SK-N-SH (cell line): ENCODE measurements at regions of chr17 and their contacts with region 1.

Region 1: GRCh38 chr17:59440784-59441441 is 109.5 kb downstream of the YPEL2 start:
- DNase-seq: peak; percentile 82
- H3K4me3 ChIP-seq: no peak overlapping the region
- H3K27ac ChIP-seq: no peak overlapping the region
- H3K4me1 ChIP-seq: peaks cover 0 to 4% of the 10 kb centered on the region in 2 experiments; a peak in 1 of 4 replicates
- H3K27me3 ChIP-seq: no peaks in the 10 kb centered on the region
- CTCF ChIP-seq: peak; percentile 99
- EP300 ChIP-seq: no peak
- RAD21 ChIP-seq: peak; percentile 100

Region 2: GRCh38 chr17:59400858-59401257 is 40.1 kb before region 1 on chr17:
- CTCF ChIA-PET with region 1: interaction called, 38 read pairs
- POLR2A ChIA-PET with region 1: no interaction called
- DNase-seq: no peak
- H3K4me3 ChIP-seq: no peak overlapping the region
- H3K27ac ChIP-seq: peak overlapping the region; percentile 9 to 91; a peak in 2 of 4 replicates
- H3K4me1 ChIP-seq: peaks cover under 1 to 38% of the 10 kb centered on the region in 2 experiments; a peak in 2 of 4 replicates
- H3K27me3 ChIP-seq: no peaks in the 10 kb centered on the region
- CTCF ChIP-seq: no peak
- EP300 ChIP-seq: no peak
- RAD21 ChIP-seq: no peak; the same call in 1 of the 2 replicates

Region 3: DNA sequence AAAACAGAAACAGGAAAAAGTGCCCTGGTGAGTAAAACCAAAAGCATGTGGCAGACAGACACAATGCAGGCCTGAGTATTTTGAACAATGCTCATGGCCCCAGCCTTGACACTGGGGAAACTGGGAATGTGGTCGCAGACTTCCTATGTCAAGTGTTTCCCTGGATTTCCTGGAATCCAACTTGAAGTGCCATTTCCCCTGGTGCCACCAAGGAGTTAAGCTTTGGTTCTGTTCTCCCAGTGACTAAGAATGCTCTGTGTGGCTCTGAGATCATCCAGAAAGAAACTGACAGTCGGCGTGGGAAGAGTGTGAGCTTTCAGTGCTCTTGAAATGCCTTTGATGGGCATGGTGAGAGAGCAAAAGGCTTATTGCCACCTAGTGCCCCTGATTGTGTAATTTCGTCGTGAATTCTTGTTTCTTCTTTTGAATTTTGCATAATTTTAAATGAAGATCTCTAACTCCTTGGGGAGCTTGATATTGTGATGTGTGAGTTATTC is 13.4 kb before region 1 on chr17:
- CTCF ChIA-PET with region 1: interaction called, 137 read pairs
- POLR2A ChIA-PET with region 1: interaction called, 3 read pairs
- DNase-seq: no peak
- H3K4me3 ChIP-seq: no peak overlapping the region
- H3K27ac ChIP-seq: peak overlapping the region; percentile 56 to 82; a peak in 3 of 4 replicates
- H3K4me1 ChIP-seq: peaks cover 13 to 47% of the 10 kb centered on the region in 2 experiments
- H3K27me3 ChIP-seq: no peaks in the 10 kb centered on the region
- CTCF ChIP-seq: peak; percentile 33
- EP300 ChIP-seq: 0 out of 4 replicates have a peak, but pooled peaks of 1 of the 2 experiments have one; percentile 17
- RAD21 ChIP-seq: peak; percentile 54

Region 4: DNA sequence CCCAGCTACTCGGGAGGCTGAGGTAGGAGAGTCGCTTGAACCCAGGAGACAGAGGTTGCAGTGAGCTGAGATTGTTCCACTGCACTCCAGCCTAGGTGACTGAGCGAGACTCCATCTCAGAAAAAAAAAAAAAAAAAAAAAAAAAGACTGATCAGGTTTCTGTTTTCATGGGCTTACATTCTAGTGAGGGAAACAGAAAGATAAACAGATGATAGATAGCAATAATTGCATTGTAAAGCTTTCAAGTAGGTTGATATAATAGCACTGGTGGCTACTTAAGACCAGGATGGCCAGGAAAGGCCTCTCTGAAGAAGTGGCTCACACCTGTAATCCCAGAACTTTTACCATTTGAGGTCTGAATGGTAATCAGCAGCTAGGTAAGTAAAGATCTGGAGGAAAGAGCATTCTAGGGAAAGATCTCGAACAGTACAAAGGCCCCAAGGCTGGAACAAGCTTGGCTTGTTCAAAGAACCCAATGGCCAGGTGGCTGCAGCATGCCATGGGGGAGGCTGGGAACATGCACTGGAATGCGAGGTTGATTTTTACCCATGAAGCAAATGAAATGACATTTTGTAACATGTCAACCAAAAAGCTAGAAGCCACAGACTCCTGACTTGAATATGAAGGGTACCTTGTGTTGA is 16.1 kb after region 1 on chr17:
- CTCF ChIA-PET with region 1: interaction called, 18 read pairs
- POLR2A ChIA-PET with region 1: no interaction called
- DNase-seq: no peak
- H3K4me3 ChIP-seq: no peak overlapping the region
- H3K27ac ChIP-seq: no peak overlapping the region
- H3K4me1 ChIP-seq: peaks cover 0 to 5% of the 10 kb centered on the region in 2 experiments; a peak in 1 of 4 replicates
- H3K27me3 ChIP-seq: no peaks in the 10 kb centered on the region
- CTCF ChIP-seq: no peak
- EP300 ChIP-seq: no peak
- RAD21 ChIP-seq: no peak

Region 5: DNA sequence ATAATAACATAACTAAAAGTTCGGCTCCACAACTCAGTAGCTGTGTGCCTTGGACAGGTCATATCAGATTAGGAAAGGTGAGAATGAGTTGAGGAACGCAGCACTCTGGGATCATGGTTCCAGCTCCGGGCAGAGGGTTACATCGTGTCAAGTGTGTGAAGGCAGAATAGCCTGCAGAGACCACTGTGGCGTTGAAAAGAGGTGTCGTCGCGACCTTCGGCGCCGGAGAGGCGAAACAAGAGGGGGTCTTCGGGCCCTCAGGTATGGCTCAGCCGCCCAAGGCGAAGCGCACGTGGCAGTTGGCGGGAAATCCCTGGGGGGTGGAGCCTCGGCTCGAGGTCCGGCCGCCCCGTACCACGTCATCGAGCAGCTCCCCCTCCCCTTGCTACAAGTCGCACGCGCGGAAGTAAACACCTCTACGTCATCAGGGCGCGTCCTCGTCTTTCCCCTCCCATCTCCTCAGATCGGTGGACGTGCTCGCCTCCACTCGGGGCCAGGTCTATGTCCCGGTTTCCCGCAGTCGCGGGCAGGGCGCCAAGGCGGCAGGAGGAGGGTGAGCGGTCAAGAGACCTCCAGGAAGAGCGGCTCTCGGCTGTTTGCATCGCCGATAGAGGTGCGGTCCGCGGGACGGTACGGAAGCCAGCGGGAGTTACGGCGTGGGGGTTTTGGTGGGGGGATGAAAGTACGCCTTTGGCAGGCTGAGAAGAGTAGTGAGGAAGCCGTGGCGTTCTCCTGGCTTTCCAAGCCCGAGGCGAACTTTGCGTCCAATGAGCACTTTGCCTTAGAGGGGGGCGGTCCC is 124.5 kb after region 1 on chr17 and contains the start of gene DHX40:
- CTCF ChIA-PET with region 1: interaction called, 22 read pairs
- POLR2A ChIA-PET with region 1: no interaction called
- DNase-seq: peak; percentile 99
- H3K4me3 ChIP-seq: peak within 1 kb of the TSS; percentile 91 to 99
- H3K27ac ChIP-seq: peak within 1 kb of the TSS; percentile 83 to 89
- H3K4me1 ChIP-seq: peaks cover 0 to 10% of the 10 kb centered on the region in 2 experiments; a peak in 3 of 4 replicates
- H3K27me3 ChIP-seq: no peaks in the 10 kb centered on the region
- CTCF ChIP-seq: no peak
- EP300 ChIP-seq: no peak
- RAD21 ChIP-seq: no peak
- polyA plus RNA-seq, gene DHX40: 33.8 and 45.5 TPM in 2 replicates